Activated CD4-positive, alpha-beta T cell treated with anti-CD3 and anti-CD28 coated beads for 36 hours (primary cell): ENCODE measurements at regions of chr9 and their contacts with region 1.

Region 1: GRCh38 chr9:8033794-8034193 is 234.2 kb upstream of the DMAC1 start:
- DNase-seq: no peak
- ATAC-seq: no peak
- H3K4me3 Mint-ChIP-seq: no peak overlapping the region
- H3K27ac Mint-ChIP-seq: no peak overlapping the region
- H3K4me1 Mint-ChIP-seq: no peaks in the 10 kb centered on the region
- H3K27me3 Mint-ChIP-seq: no peaks in the 10 kb centered on the region

Region 2: DNA sequence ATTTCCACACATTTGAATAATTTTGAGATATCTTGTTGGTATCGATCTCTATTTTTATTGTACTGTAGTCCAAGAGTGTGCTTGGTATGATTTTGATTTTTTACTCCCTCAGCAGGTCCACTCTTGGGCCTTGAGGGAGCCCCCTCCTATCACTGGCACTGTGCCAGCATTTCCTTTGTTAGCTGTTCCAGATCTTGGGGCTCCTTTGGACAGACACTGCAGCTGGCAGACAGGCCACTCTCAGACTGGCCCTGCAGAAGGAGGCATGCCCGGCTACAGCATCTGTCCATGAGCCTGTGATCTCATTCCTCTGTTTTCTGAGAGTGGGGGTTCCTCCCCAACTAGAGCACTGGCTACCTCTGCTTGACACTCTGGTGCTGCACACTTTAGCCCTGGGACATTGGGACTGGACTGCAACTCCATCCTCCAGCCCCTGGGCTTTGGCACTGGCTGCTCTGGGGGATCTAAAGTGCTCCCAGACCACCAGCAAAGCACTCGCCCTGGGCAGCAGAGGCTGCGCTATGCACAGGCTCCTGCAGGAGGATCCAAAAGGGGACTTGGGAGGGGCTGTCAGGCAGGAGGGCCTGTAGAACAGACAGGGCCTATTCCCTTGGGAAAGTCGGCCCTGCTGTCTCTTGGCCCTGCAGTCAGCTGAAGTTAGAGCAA is 37.1 kb after region 1 on chr9:
- CTCF ChIA-PET with region 1: no interaction called
- POLR2A ChIA-PET with region 1: no interaction called
- intact Hi-C with region 1: loop called in 1 of 2 experiments (anchors 2 kb)
- DNase-seq: no peak
- ATAC-seq: no peak
- H3K4me3 Mint-ChIP-seq: no peak overlapping the region
- H3K27ac Mint-ChIP-seq: no peak overlapping the region
- H3K4me1 Mint-ChIP-seq: no peaks in the 10 kb centered on the region
- H3K27me3 Mint-ChIP-seq: no peaks in the 10 kb centered on the region

Region 3: GRCh38 chr9:8136477-8136876 is 102.7 kb after region 1 on chr9:
- CTCF ChIA-PET with region 1: no interaction called
- POLR2A ChIA-PET with region 1: no interaction called
- intact Hi-C with region 1: no loop called
- DNase-seq: no peak
- ATAC-seq: no peak
- H3K4me3 Mint-ChIP-seq: no peak overlapping the region
- H3K27ac Mint-ChIP-seq: no peak overlapping the region
- H3K4me1 Mint-ChIP-seq: no peaks in the 10 kb centered on the region
- H3K27me3 Mint-ChIP-seq: no peaks in the 10 kb centered on the region

Region 4: GRCh38 chr9:8188720-8189407 is 155.1 kb after region 1 on chr9:
- CTCF ChIA-PET with region 1: no interaction called
- POLR2A ChIA-PET with region 1: no interaction called
- intact Hi-C with region 1: no loop called
- DNase-seq: peak; percentile 61
- ATAC-seq: peak; percentile 94
- H3K4me3 Mint-ChIP-seq: no peak overlapping the region
- H3K27ac Mint-ChIP-seq: no peak overlapping the region
- H3K4me1 Mint-ChIP-seq: peaks cover 13% of the 10 kb centered on the region
- H3K27me3 Mint-ChIP-seq: peaks cover 2% of the 10 kb centered on the region

Region 5: DNA sequence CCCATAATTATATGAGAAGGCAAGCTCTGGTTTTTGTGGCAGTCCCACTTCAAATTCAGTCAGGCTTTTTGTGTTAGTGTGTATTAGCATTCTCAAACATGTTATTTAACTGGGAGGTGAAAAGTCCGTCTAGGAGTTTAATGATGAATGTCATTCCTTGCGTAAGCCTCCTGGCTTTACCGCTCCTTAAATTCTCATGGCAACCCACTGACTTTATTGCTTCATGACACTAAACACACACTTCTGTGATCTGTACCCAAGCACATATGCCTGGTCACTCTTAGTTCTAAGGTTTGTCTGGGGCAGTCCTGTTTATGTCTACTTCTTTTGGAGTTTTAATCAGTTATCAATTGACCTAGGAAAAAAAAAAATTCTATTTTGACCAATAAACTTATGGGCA is 443.7 kb after region 1 on chr9:
- CTCF ChIA-PET with region 1: no interaction called
- POLR2A ChIA-PET with region 1: no interaction called
- intact Hi-C with region 1: no loop called
- DNase-seq: no peak
- ATAC-seq: no peak
- H3K4me3 Mint-ChIP-seq: no peak overlapping the region
- H3K27ac Mint-ChIP-seq: no peak overlapping the region
- H3K4me1 Mint-ChIP-seq: no peaks in the 10 kb centered on the region
- H3K27me3 Mint-ChIP-seq: no peaks in the 10 kb centered on the region